Endothelial cell of umbilical vein (primary cell): ENCODE measurements at regions of chr19 and their contacts with region 1.

Region 1: DNA sequence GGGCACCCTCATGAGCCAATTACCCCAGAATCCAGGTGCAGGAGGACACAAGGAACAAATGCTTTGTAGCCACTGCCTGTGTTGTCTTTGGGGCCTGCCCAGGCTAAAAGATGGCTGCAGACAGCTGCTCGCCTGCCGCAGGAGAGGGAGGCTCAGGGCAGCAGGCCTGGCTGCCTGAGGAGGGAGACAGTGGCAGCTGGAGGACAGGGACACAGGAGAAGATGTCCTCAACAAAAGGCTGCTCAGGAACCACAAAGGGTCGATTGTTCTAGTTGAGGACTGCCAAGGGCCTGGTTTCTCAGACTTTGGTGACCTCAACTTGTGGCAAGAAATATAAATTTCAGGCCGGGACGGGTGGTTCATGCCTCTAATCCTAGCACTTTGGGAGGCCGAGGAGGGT is 7.6 kb downstream of the SIRT2 start:
- DNase-seq: no peak
- H3K4me3 ChIP-seq: no peak overlapping the region
- H3K27ac ChIP-seq: no peak overlapping the region
- H3K4me1 ChIP-seq: no peaks in the 10 kb centered on the region
- H3K27me3 ChIP-seq: no peaks in the 10 kb centered on the region
- CTCF ChIP-seq: no peak
- POLR2A ChIP-seq: no peak

Region 2: GRCh38 chr19:38514812-38515633 is 376.7 kb before region 1 on chr19:
- CTCF ChIA-PET with region 1: no interaction called
- POLR2A ChIA-PET with region 1: no interaction called
- dilution Hi-C with region 1: no loop called
- intact Hi-C with region 1: loop called (anchors 2 kb)
- DNase-seq: peak; percentile 52
- H3K4me3 ChIP-seq: no peak overlapping the region
- H3K27ac ChIP-seq: no peak overlapping the region
- H3K4me1 ChIP-seq: no peaks in the 10 kb centered on the region
- H3K27me3 ChIP-seq: no peaks in the 10 kb centered on the region
- CTCF ChIP-seq: peak; percentile 72 to 95
- POLR2A ChIP-seq: no peak

Region 3: DNA sequence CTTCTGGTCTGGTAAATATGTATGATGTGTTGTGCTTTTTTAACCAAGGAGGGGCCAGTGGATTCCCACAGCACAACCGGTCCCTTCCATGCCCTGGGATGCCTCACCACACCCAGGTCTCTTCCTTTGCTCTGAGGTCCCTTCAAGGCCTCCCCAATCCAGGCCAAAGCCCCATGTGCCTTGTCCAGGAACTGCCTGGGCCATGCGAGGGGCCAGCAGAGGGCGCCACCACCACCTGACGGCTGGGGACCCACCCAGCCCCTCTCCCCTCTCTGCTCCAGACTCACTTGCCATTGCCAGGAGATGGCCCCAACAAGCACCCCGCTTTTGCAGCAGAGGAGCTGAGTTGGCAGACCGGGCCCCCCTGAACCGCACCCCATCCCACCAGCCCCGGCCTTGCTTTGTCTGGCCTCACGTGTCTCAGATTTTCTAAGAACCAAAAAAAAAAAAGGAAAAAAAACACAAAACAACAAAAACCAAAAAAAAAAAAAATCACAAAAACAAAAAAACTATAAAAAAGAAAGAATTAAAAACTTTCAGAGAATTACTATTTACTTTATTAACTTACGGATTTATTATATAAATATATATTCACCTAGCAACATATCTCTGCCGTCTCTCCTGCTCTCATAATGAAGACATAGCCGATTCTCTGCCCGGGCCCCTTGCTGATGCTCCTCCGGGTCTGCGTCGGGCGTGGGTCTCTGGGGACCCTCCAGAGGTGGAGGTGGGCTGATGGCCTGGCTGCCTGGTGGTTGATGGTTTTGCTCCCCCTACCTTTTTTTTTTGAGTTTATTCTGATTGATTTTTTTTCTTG is 161.9 kb before region 1 on chr19:
- CTCF ChIA-PET with region 1: interaction called, 8 read pairs
- POLR2A ChIA-PET with region 1: no interaction called
- dilution Hi-C with region 1: no loop called
- intact Hi-C with region 1: loop called (anchors 1 kb)
- DNase-seq: peak; percentile 57
- H3K4me3 ChIP-seq: no peak overlapping the region
- H3K27ac ChIP-seq: no peak overlapping the region
- H3K4me1 ChIP-seq: peaks cover 15% of the 10 kb centered on the region
- H3K27me3 ChIP-seq: no peaks in the 10 kb centered on the region
- CTCF ChIP-seq: peak; percentile 76 to 91
- POLR2A ChIP-seq: no peak

Region 4: GRCh38 chr19:38769635-38770211 is 122.0 kb before region 1 on chr19:
- CTCF ChIA-PET with region 1: interaction called, 12 read pairs
- POLR2A ChIA-PET with region 1: no interaction called
- dilution Hi-C with region 1: no loop called
- intact Hi-C with region 1: no loop called
- DNase-seq: peak; percentile 70
- H3K4me3 ChIP-seq: peak overlapping the region in 1 of 3 experiments; percentile 18
- H3K27ac ChIP-seq: no peak overlapping the region
- H3K4me1 ChIP-seq: peaks cover 4% of the 10 kb centered on the region
- H3K27me3 ChIP-seq: no peaks in the 10 kb centered on the region
- CTCF ChIP-seq: peak; percentile 79 to 84
- POLR2A ChIP-seq: no peak

Region 5: DNA sequence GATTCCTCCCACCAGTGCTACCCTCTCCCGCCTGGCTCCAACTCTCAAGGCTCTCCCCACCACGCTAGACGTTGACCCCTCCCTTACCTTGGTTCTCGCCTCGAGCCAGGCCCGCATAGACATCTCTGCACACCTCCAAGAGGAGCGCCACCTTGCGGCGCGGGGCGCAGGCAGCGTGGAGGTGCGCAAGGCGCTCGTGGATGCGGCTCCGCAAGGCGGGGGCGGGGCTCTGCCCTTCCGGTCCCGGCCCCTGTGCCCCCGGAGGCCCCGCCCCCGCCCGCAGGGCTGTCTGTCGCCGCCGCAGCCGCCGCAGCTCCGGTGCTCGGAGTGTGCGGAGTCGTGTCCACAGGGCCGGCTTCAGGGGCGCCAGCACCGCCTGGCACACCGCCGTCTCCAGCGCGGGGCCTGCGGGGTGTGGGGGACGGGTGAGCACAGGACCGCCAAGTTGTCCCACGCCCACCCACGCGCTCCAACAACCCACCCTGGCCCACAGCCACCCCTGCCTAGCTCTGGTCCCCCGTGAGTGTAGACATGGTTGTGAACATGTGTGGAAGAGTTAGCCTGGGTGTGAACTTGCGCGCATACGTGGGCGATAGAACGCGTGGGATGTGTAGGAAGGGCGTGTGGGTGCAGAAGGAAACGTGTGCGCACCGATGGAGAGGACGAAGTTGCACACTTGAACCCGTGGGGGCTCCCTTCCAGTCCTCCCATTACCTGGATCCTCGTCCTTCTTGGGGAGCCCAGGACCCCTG is 21.7 kb before region 1 on chr19:
- CTCF ChIA-PET with region 1: interaction called, 29 read pairs
- POLR2A ChIA-PET with region 1: no interaction called
- dilution Hi-C with region 1: no loop called
- intact Hi-C with region 1: no loop called
- DNase-seq: peak; percentile 61
- H3K4me3 ChIP-seq: peak overlapping the region; percentile 3 to 40 (median 33)
- H3K27ac ChIP-seq: no peak overlapping the region
- H3K4me1 ChIP-seq: peaks cover 9% of the 10 kb centered on the region
- H3K27me3 ChIP-seq: no peaks in the 10 kb centered on the region
- CTCF ChIP-seq: peak; percentile 75 to 84
- POLR2A ChIP-seq: no peak

Region 6: GRCh38 chr19:38877781-38878574 is 13.8 kb before region 1 on chr19 and contains the start of gene RINL:
- CTCF ChIA-PET with region 1: interaction called, 29 read pairs
- POLR2A ChIA-PET with region 1: no interaction called
- dilution Hi-C with region 1: no loop called
- intact Hi-C with region 1: no loop called
- DNase-seq: peak; percentile 26
- H3K4me3 ChIP-seq: no peak within 1 kb of the TSS
- H3K27ac ChIP-seq: peak within 1 kb of the TSS; percentile 28
- H3K4me1 ChIP-seq: peaks cover 13% of the 10 kb centered on the region
- H3K27me3 ChIP-seq: no peaks in the 10 kb centered on the region
- CTCF ChIP-seq: no peak
- POLR2A ChIP-seq: peak; percentile 46
- total RNA-seq, gene RINL: 6.6 and 10.1 TPM in 2 replicates